Right ventricle myocardium inferior (tissue), 1 donor: ENCODE measurements at regions of chr3 and their contacts with region 1.

Region 1: DNA sequence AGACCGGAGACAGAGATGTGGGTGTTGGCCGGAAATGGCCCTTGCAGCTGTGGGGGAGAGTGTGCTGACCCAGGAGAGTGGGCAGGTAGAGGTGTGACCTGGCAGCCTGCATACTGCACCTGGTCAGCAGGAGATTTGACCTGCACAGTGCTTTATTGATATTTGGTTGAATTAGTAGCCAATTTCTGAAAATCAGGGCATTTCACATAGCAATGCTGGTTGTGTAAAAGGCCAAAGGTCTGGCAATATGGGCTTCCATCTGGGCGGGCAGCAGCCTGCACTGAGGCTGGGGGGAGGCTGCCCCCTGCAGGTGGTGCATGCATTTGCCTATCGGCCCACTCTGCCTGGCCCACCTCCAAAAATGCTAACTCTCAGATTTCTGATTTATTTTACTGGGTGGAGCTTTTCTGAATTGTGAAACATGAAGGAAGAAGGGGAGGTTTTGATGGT is 9.4 kb upstream of the MGLL start:
- DNase-seq: no peak
- ATAC-seq: peak; percentile 56

Region 2: GRCh38 chr3:127426444-127427153 is 405.1 kb before region 1 on chr3:
- intact Hi-C with region 1: no loop called
- DNase-seq: no peak
- ATAC-seq: no peak

Region 3: GRCh38 chr3:127574880-127575878 is 256.6 kb before region 1 on chr3:
- intact Hi-C with region 1: loop called (anchors 5 kb)
- DNase-seq: peak; percentile 93
- ATAC-seq: peak; percentile 79

Region 4: GRCh38 chr3:127652231-127652995 is 179.3 kb before region 1 on chr3:
- intact Hi-C with region 1: loop called (anchors 2 kb)
- DNase-seq: no peak
- ATAC-seq: peak; percentile 86